Caco-2 (cell line): ENCODE measurements at regions of chr3 and their contacts with region 1.

Region 1: GRCh38 chr3:137970914-137971831 is 38.8 kb upstream of the CLDN18 start:
- DNase-seq: peak; percentile 80 to 84
- H3K4me3 ChIP-seq: no peak overlapping the region
- H3K4me3 Mint-ChIP-seq: peak overlapping the region; percentile 71
- H3K27ac Mint-ChIP-seq: no peak overlapping the region
- H3K4me1 ChIP-seq: no peaks in the 10 kb centered on the region
- H3K4me1 Mint-ChIP-seq: no peaks in the 10 kb centered on the region
- H3K27me3 ChIP-seq: no peaks in the 10 kb centered on the region
- H3K27me3 Mint-ChIP-seq: no peaks in the 10 kb centered on the region
- CTCF ChIP-seq: peak; percentile 76 to 90

Region 2: GRCh38 chr3:137866928-137867327 is 104.2 kb before region 1 on chr3:
- CTCF ChIA-PET with region 1: no interaction called
- POLR2A ChIA-PET with region 1: no interaction called
- intact Hi-C with region 1: no loop called
- DNase-seq: no peak
- H3K4me3 ChIP-seq: no peak overlapping the region
- H3K4me3 Mint-ChIP-seq: no peak overlapping the region
- H3K27ac Mint-ChIP-seq: no peak overlapping the region
- H3K4me1 ChIP-seq: peaks cover 7% of the 10 kb centered on the region; the same call in 1 of the 2 replicates
- H3K4me1 Mint-ChIP-seq: peaks cover 6% of the 10 kb centered on the region
- H3K27me3 ChIP-seq: no peaks in the 10 kb centered on the region
- H3K27me3 Mint-ChIP-seq: peaks cover 7% of the 10 kb centered on the region
- CTCF ChIP-seq: no peak

Region 3: GRCh38 chr3:137988152-137988551 is 17.0 kb after region 1 on chr3:
- CTCF ChIA-PET with region 1: no interaction called
- POLR2A ChIA-PET with region 1: no interaction called
- intact Hi-C with region 1: loop called (anchors 2 kb)
- DNase-seq: peak; percentile 35 to 50
- H3K4me3 ChIP-seq: no peak overlapping the region
- H3K4me3 Mint-ChIP-seq: no peak overlapping the region
- H3K27ac Mint-ChIP-seq: peak overlapping the region; percentile 42
- H3K4me1 ChIP-seq: peaks cover 17% of the 10 kb centered on the region
- H3K4me1 Mint-ChIP-seq: peaks cover 14% of the 10 kb centered on the region
- H3K27me3 ChIP-seq: no peaks in the 10 kb centered on the region
- H3K27me3 Mint-ChIP-seq: no peaks in the 10 kb centered on the region
- CTCF ChIP-seq: no peak

Region 4: GRCh38 chr3:138051946-138052802 is 81.0 kb after region 1 on chr3:
- CTCF ChIA-PET with region 1: no interaction called
- POLR2A ChIA-PET with region 1: no interaction called
- intact Hi-C with region 1: loop called (anchors 1 kb)
- DNase-seq: peak in 1 of 2 experiments; percentile 64
- H3K4me3 ChIP-seq: no peak overlapping the region
- H3K4me3 Mint-ChIP-seq: no peak overlapping the region
- H3K27ac Mint-ChIP-seq: no peak overlapping the region
- H3K4me1 ChIP-seq: no peaks in the 10 kb centered on the region
- H3K4me1 Mint-ChIP-seq: no peaks in the 10 kb centered on the region
- H3K27me3 ChIP-seq: no peaks in the 10 kb centered on the region
- H3K27me3 Mint-ChIP-seq: peaks cover 2% of the 10 kb centered on the region
- CTCF ChIP-seq: peak; percentile 63 to 82